ENCODE measurements at regions of chr14 and their contacts with region 1.

Region 1: GRCh38 chr14:54566410-54567223 is at the start of gene SAMD4A:
- DNase-seq: peak; percentile 41 to 53 (median 53)
- H3K4me3 ChIP-seq: peak within 1 kb of the TSS; percentile 53 to 84 (median 69)
- H3K4me3 Mint-ChIP-seq: peak within 1 kb of the TSS; percentile 95 to 97
- H3K27ac ChIP-seq: no peak within 1 kb of the TSS
- H3K27ac Mint-ChIP-seq: no peak within 1 kb of the TSS
- H3K4me1 ChIP-seq: peaks cover 41 to 49% of the 10 kb centered on the region in 2 donors
- H3K4me1 Mint-ChIP-seq: peaks cover 28% of the 10 kb centered on the region
- H3K27me3 ChIP-seq: peaks cover 31 to 67% of the 10 kb centered on the region in 2 donors
- H3K27me3 Mint-ChIP-seq: peaks cover 51 to 57% (median 56%) of the 10 kb centered on the region in 3 donors
- CTCF ChIP-seq: peak; percentile 22
- polyA plus RNA-seq, gene SAMD4A: 3.2 to 8.6 (median 4.2) TPM

Region 2: GRCh38 chr14:54773171-54773975 is 206.8 kb after region 1 on chr14:
- intact Hi-C with region 1: loop called (anchors 2 kb)
- DNase-seq: peak; percentile 81 to 92 (median 81)
- H3K4me3 ChIP-seq: no peak overlapping the region
- H3K4me3 Mint-ChIP-seq: peak overlapping the region; percentile 35 to 82
- H3K27ac ChIP-seq: peak overlapping the region; percentile 10 to 30
- H3K27ac Mint-ChIP-seq: peak overlapping the region; percentile 17 to 88 (median 50)
- H3K4me1 ChIP-seq: peaks cover 55 to 58% of the 10 kb centered on the region in 2 donors
- H3K4me1 Mint-ChIP-seq: peaks cover 53% of the 10 kb centered on the region
- H3K27me3 ChIP-seq: peaks cover 0 to 7% of the 10 kb centered on the region in 2 donors
- H3K27me3 Mint-ChIP-seq: peaks cover 13 to 28% (median 19%) of the 10 kb centered on the region in 3 donors
- CTCF ChIP-seq: no peak

Region 3: GRCh38 chr14:54805521-54806322 is 239.1 kb after region 1 on chr14:
- intact Hi-C with region 1: loop called (anchors 5 kb)
- DNase-seq: peak; percentile 76 to 84 (median 81)
- H3K4me3 ChIP-seq: no peak overlapping the region
- H3K4me3 Mint-ChIP-seq: peak overlapping the region; percentile 3 to 55
- H3K27ac ChIP-seq: no peak overlapping the region
- H3K27ac Mint-ChIP-seq: no peak overlapping the region
- H3K4me1 ChIP-seq: peaks cover 7 to 10% of the 10 kb centered on the region in 2 donors
- H3K4me1 Mint-ChIP-seq: peaks cover 12% of the 10 kb centered on the region
- H3K27me3 ChIP-seq: peaks cover 0 to 10% of the 10 kb centered on the region in 2 donors
- H3K27me3 Mint-ChIP-seq: peaks cover 12 to 18% (median 17%) of the 10 kb centered on the region in 3 donors
- CTCF ChIP-seq: peak; percentile 95

Measured in CD14-positive monocyte (primary cell).